Head of caudate nucleus (tissue), 42 donors: ENCODE measurements at regions of chr16 and their contacts with region 1.

Region 1: GRCh38 chr16:51982715-51983680 is 563.9 kb downstream of the TOX3 start:
- DNase-seq: peak in 33 of 42 donors; percentile 22 to 89 (median 60)

Region 2: DNA sequence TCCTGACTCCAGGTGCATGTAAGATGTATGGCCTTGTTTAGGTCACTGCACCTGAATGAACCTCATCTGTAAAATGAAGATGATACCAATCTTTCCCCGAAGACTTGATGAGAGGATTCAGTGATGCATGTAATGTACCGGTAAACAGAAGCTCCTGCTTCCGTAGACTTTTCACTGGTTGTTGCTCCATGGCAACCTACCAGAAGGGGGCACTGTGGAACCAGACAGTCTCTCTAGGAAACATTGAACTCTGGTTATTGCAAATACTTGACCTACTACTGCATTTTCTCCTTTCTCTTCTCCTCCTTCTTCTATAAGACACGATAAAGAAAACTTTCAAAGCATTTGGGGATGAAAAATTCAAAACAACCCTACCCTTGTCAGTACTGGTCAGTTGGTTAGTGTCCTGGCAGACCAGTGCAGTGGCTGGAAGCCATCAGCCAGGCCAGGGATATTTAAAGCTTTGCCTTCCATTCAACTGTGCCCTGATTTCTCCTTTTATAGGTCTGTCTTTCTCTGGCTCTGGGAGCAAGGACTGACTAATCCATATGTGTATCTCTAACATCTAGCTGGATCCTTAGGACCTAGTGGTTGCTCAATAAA is 164.6 kb before region 1 on chr16:
- intact Hi-C with region 1: loop called (anchors 10 kb)
- DNase-seq: peak in 37 of 42 donors; percentile 2 to 82 (median 45)

Region 3: DNA sequence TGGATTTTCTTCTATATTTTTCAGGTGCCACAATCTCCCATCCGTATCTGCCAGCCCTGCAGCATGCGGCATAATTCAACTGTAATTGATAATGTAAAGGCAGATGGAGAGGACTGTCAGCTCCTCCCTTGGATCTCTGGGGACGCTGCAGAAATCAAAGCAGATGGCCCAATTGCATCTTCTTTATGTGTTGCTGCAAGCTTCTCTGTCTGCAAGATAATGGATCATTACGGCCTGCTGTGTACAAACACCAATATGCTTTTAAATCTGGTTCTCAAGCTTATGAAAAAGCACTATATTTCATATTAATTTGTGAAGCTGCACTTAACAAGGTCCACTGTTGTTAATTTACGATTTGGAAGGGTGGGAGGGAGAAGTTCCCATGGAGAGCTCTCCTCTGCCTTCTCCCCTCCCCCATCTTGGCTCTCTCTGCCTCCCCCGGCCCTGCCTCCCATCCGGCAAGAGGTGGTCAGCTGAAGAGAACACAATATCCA is 43.6 kb before region 1 on chr16:
- intact Hi-C with region 1: no loop called
- DNase-seq: no peak